ENCODE measurements at regions of chr15 and their contacts with region 1.

Region 1: DNA sequence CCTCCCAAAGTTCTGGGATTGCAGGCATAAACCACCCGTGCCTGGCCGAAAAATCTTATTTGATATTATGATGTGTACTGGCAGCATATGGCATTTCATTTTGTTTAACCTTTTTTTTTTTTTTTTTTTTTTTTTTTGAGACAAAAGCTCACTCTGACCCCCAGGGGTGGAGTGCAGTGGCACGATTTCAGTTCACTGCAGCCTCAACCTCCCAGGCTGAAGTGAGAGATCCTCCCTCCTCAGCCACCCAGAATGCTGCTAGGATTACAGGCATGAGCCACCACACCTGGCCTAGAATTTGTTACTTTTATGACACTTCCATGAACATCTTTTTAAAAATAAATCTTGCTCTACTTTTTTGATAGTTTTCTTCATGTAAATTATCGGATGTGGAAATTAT is 12.0 kb downstream of the TERB2 start:
- DNase-seq: no peak
- H3K4me3 Mint-ChIP-seq: no peak overlapping the region
- H3K27ac Mint-ChIP-seq: no peak overlapping the region
- H3K4me1 Mint-ChIP-seq: no peaks in the 10 kb centered on the region
- H3K27me3 Mint-ChIP-seq: peaks cover 6% of the 10 kb centered on the region

Region 2: DNA sequence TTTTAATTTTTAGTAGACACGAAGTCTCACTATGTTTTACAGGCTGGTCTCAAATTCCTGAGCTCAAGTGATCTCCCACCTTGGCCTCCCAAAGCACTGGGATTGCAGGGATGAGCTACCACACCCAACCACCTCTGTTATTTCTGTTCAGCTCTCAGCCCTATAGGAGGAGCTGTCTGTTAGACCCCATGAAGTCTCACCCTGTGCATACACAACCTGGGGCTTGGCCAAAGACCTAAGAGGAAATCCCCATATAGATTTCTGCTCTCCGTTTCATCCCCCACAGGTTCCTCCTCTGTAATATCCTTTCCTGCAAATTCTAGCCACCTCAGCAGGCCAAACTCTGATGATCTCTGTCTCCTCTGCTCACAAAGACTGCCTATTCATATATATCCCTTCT is 597.6 kb before region 1 on chr15:
- intact Hi-C with region 1: no loop called
- DNase-seq: no peak
- H3K4me3 Mint-ChIP-seq: no peak overlapping the region
- H3K27ac Mint-ChIP-seq: no peak overlapping the region
- H3K4me1 Mint-ChIP-seq: peaks cover 2% of the 10 kb centered on the region
- H3K27me3 Mint-ChIP-seq: no peaks in the 10 kb centered on the region

Region 3: GRCh38 chr15:45037936-45038335 is 69.5 kb after region 1 on chr15:
- intact Hi-C with region 1: loop called (anchors 5 kb)
- DNase-seq: no peak
- H3K4me3 Mint-ChIP-seq: no peak overlapping the region
- H3K27ac Mint-ChIP-seq: no peak overlapping the region
- H3K4me1 Mint-ChIP-seq: peaks cover 16% of the 10 kb centered on the region
- H3K27me3 Mint-ChIP-seq: no peaks in the 10 kb centered on the region